ENCODE measurements at regions of chr22 and their contacts with region 1.

Region 1: GRCh38 chr22:22463855-22464540 is 44.5 kb downstream of the ZNF280B start:
- DNase-seq: peak; percentile 97 to 99 (median 99)
- ATAC-seq: peak; percentile 97
- H3K4me3 ChIP-seq: no peak overlapping the region
- H3K27ac ChIP-seq: no peak overlapping the region
- H3K4me1 ChIP-seq: peaks cover 0 to 2% of the 10 kb centered on the region in 2 experiments; a peak in 1 of 5 replicates
- H3K27me3 ChIP-seq: peaks cover 13 to 18% of the 10 kb centered on the region in 2 experiments; a peak in 4 of 5 replicates
- CTCF ChIP-seq: peak in 2 of 3 experiments; percentile 100; a peak in 4 of 6 replicates
- EP300 ChIP-seq: no peak; the same call in 1 of the 2 replicates
- POLR2A ChIP-seq: no peak
- RAD21 ChIP-seq: peak in 1 of 2 experiments; percentile 100; a peak in 2 of 4 replicates

Region 2: GRCh38 chr22:22207845-22208564 is 256.0 kb before region 1 on chr22:
- CTCF ChIA-PET with region 1: interaction called, 8 read pairs
- POLR2A ChIA-PET with region 1: interaction called, 3 read pairs
- in situ Hi-C with region 1: no loop called
- intact Hi-C with region 1: loop called (anchors 1 kb)
- DNase-seq: peak; percentile 96 to 98 (median 98)
- ATAC-seq: peak; percentile 94
- H3K4me3 ChIP-seq: no peak overlapping the region
- H3K27ac ChIP-seq: no peak overlapping the region
- H3K4me1 ChIP-seq: peaks cover 0 to 6% of the 10 kb centered on the region in 2 experiments; a peak in 2 of 5 replicates
- H3K27me3 ChIP-seq: peaks cover 48 to 50% of the 10 kb centered on the region in 2 experiments
- CTCF ChIP-seq: peak in 2 of 3 experiments; percentile 99 to 100; a peak in 4 of 6 replicates
- EP300 ChIP-seq: peak; percentile 38; the same call in 1 of the 2 replicates
- POLR2A ChIP-seq: no peak
- RAD21 ChIP-seq: peak in 1 of 2 experiments; percentile 99; a peak in 2 of 4 replicates

Region 3: GRCh38 chr22:22318723-22319465 is 145.1 kb before region 1 on chr22:
- CTCF ChIA-PET with region 1: no interaction called
- POLR2A ChIA-PET with region 1: no interaction called
- in situ Hi-C with region 1: no loop called
- intact Hi-C with region 1: no loop called
- DNase-seq: peak in 1 of 4 experiments; percentile 21
- ATAC-seq: no peak
- H3K4me3 ChIP-seq: no peak overlapping the region
- H3K27ac ChIP-seq: no peak overlapping the region
- H3K4me1 ChIP-seq: 0 out of 5 replicates have a peak, but pooled peaks cover 0 to 2% of the 10 kb centered on the region in 2 experiments
- H3K27me3 ChIP-seq: no peaks in the 10 kb centered on the region
- CTCF ChIP-seq: no peak
- EP300 ChIP-seq: no peak
- POLR2A ChIP-seq: no peak
- RAD21 ChIP-seq: no peak

Region 4: GRCh38 chr22:22450343-22450839 is 13.6 kb before region 1 on chr22:
- CTCF ChIA-PET with region 1: interaction called, 4 read pairs
- POLR2A ChIA-PET with region 1: interaction called, 37 read pairs
- in situ Hi-C with region 1: no loop called
- intact Hi-C with region 1: no loop called
- DNase-seq: no peak
- ATAC-seq: peak; percentile 69
- H3K4me3 ChIP-seq: no peak overlapping the region
- H3K27ac ChIP-seq: no peak overlapping the region
- H3K4me1 ChIP-seq: no peaks in the 10 kb centered on the region
- H3K27me3 ChIP-seq: peaks cover 21 to 26% of the 10 kb centered on the region in 2 experiments
- CTCF ChIP-seq: no peak
- EP300 ChIP-seq: no peak
- POLR2A ChIP-seq: no peak
- RAD21 ChIP-seq: no peak

Region 5: DNA sequence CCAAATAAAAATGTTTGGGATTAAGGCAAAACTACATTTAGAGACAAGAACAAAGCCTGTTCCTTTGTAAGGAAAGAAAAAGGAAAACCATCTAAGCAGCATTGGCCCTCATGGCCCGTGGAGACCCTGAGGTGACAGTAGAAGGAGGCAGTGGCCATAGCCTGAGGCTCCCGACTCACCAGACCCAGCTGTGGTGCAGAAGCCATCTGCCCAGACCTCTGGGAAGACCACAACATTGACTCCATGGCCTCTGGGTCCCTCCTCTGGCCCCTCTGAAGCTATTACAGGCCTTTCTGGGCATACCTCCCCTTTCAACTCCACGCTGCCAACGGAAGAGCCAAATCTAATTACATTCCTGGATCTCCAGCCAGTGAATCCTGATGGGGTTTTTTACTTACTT is 88.6 kb after region 1 on chr22:
- CTCF ChIA-PET with region 1: interaction called, 65 read pairs
- POLR2A ChIA-PET with region 1: interaction called, 5 read pairs
- in situ Hi-C with region 1: no loop called
- intact Hi-C with region 1: loop called (anchors 1 kb)
- DNase-seq: peak; percentile 84 to 87 (median 86)
- ATAC-seq: peak; percentile 21
- H3K4me3 ChIP-seq: no peak overlapping the region
- H3K27ac ChIP-seq: peak overlapping the region; percentile 2; the same call in 2 of the 3 replicates
- H3K4me1 ChIP-seq: peaks cover 52 to 63% of the 10 kb centered on the region in 2 experiments
- H3K27me3 ChIP-seq: no peaks in the 10 kb centered on the region
- CTCF ChIP-seq: no peak
- EP300 ChIP-seq: no peak
- POLR2A ChIP-seq: no peak
- RAD21 ChIP-seq: no peak

Region 6: DNA sequence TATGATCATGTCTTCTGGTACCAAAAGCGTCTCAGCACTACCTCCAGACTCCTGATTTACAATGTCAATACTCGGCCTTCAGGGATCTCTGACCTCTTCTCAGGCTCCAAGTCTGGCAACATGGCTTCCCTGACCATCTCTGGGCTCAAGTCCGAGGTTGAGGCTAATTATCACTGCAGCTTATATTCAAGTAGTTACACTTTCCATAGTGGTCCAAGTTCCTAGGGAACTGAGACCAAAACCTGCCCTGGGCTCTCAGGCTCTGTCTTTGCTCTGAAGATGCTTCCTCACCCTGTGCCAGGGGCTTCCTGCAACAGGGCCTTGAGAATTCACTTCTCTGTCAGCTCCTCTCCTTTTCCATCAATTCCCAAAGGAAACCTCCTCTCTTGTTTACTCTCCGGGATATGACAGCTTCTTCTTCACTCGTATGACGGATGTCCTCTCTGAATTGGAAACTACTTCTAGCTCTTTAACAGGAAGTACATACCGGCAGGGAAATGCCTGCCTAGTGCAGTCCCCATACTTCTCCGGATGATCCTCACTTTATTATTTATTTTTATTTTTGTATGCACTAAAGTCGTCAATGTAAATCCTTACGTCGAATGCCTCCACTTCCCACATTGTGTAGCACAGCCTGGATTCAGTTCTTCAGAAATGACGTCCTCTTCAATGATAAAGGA is 124.6 kb after region 1 on chr22:
- CTCF ChIA-PET with region 1: interaction called, 30 read pairs
- POLR2A ChIA-PET with region 1: interaction called, 4 read pairs
- in situ Hi-C with region 1: no loop called
- intact Hi-C with region 1: loop called (anchors 1 kb)
- DNase-seq: no peak
- ATAC-seq: no peak
- H3K4me3 ChIP-seq: no peak overlapping the region
- H3K27ac ChIP-seq: no peak overlapping the region
- H3K4me1 ChIP-seq: no peaks in the 10 kb centered on the region
- H3K27me3 ChIP-seq: peaks cover 17 to 33% of the 10 kb centered on the region in 2 experiments; a peak in 4 of 5 replicates
- CTCF ChIP-seq: no peak
- EP300 ChIP-seq: no peak
- POLR2A ChIP-seq: no peak
- RAD21 ChIP-seq: no peak

Region 7: GRCh38 chr22:22692707-22693530 is 228.9 kb after region 1 on chr22:
- CTCF ChIA-PET with region 1: interaction called, 78 read pairs
- POLR2A ChIA-PET with region 1: interaction called, 3 read pairs
- in situ Hi-C with region 1: loop called (anchors 5 kb)
- intact Hi-C with region 1: loop called (anchors 2 kb)
- DNase-seq: peak; percentile 96 to 100 (median 99)
- ATAC-seq: peak; percentile 94
- H3K4me3 ChIP-seq: no peak overlapping the region
- H3K27ac ChIP-seq: no peak overlapping the region
- H3K4me1 ChIP-seq: no peaks in the 10 kb centered on the region
- H3K27me3 ChIP-seq: peaks cover 0 to 27% of the 10 kb centered on the region in 2 experiments; a peak in 2 of 5 replicates
- CTCF ChIP-seq: no peak
- EP300 ChIP-seq: no peak
- POLR2A ChIP-seq: no peak
- RAD21 ChIP-seq: no peak

Region 8: DNA sequence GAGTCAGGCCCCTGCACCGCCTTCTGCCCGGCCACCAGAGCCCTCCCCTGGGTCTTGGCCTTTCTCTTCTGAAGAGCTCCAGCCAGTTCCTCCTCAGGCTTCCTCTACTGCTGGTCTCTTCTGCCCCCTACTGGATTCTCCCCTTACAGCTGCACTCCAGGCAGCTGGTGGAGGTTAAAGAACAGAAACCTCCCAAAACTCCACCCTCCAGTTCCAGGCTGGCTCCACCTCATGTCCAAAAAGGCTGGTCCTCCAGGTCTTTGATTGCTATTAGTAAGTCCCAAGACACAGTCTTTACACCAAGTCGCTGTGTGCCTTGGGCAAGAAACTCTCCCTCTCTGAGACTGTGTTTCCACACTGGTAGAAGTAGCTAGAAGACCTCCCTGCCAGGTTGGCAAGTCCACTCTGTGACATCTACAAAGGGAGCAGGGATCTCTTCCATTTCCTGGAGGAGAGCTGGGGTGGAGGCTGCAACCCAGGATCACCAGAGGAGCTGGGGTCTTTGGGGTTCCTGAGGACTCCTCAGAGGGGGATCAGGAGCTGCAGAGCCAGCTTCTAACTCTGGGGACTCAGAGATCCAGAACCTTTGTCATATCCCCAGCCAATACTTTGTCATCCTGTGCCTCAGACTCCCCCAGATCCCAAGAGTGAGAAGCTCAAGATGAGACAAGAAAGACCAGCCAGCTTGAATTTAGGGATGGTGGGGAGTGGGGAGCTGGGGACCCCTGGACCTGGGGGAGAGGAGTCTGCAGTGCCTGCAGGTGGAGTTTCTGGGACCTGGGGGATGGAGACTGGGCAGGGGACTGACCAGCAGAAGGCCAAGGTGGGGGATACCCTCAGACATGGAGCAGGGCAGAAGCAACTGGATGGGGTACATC is 420.3 kb after region 1 on chr22:
- CTCF ChIA-PET with region 1: interaction called, 7 read pairs
- POLR2A ChIA-PET with region 1: no interaction called
- in situ Hi-C with region 1: loop called (anchors 10 kb)
- intact Hi-C with region 1: loop called (anchors 2 kb)
- DNase-seq: peak; percentile 57 to 100 (median 78)
- ATAC-seq: peak; percentile 94
- H3K4me3 ChIP-seq: no peak overlapping the region
- H3K27ac ChIP-seq: no peak overlapping the region
- H3K4me1 ChIP-seq: peaks cover 0 to 9% of the 10 kb centered on the region in 2 experiments; a peak in 1 of 5 replicates
- H3K27me3 ChIP-seq: peaks cover 0 to 46% of the 10 kb centered on the region in 2 experiments; a peak in 2 of 5 replicates
- CTCF ChIP-seq: no peak
- EP300 ChIP-seq: no peak
- POLR2A ChIP-seq: no peak
- RAD21 ChIP-seq: no peak

Region 9: DNA sequence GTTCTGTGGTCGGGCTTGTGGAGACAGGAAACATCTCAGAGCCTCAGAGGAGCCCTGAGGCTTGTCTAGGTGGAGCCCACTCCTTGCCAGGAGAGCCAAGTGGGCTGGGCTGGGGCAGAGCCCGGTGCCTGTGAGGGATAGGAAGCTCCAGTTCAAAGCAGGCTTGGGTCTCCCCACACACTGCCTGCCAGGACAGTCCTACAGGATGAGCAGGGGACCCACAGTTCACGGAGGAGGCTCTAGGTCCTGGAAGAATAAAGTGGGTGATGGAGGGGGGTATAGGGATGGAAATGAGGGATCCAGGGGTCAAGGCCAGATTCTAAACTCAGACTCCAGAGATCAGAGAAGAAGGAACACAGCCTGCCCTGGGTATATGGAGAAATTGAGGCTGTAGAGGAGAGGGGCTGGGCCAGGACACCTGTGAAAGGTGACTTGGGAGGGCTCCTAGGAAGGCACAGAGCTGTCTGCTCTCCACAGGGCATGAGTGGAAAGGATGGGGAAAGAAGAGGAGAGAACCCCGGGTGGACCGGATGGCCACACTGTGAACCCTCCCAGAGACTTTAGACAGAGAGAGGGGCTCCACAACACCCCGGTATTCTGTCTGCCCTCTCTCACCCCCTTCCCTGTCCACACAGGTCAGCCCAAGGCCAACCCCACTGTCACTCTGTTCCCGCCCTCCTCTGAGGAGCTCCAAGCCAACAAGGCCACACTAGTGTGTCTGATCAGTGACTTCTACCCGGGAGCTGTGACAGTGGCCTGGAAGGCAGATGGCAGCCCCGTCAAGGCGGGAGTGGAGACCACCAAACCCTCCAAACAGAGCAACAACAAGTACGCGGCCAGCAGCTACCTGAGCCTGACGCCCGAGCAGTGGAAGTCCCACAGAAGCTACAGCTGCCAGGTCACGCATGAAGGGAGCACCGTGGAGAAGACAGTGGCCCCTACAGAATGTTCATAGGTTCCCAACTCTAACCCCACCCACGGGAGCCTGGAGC is 431.0 kb after region 1 on chr22:
- CTCF ChIA-PET with region 1: no interaction called
- POLR2A ChIA-PET with region 1: no interaction called
- in situ Hi-C with region 1: no loop called
- intact Hi-C with region 1: no loop called
- DNase-seq: peak in 3 of 4 experiments; percentile 56 to 57 (median 56)
- ATAC-seq: peak; percentile 11
- H3K4me3 ChIP-seq: no peak overlapping the region
- H3K27ac ChIP-seq: no peak overlapping the region
- H3K4me1 ChIP-seq: no peaks in the 10 kb centered on the region
- H3K27me3 ChIP-seq: peaks cover 15 to 43% of the 10 kb centered on the region in 2 experiments; a peak in 4 of 5 replicates
- CTCF ChIP-seq: no peak
- EP300 ChIP-seq: no peak
- POLR2A ChIP-seq: no peak
- RAD21 ChIP-seq: no peak

Measured in K562 (cell line).